ENCODE measurements at regions of chr9 and their contacts with region 1.

Region 1: GRCh38 chr9:125255781-125256391 is 5.7 kb upstream of the GAPVD1 start:
- H3K4me3 ChIP-seq: no peak overlapping the region
- H3K27ac ChIP-seq: no peak overlapping the region
- H3K4me1 ChIP-seq: no peaks in the 10 kb centered on the region
- CTCF ChIP-seq: peak; percentile 38

Region 2: GRCh38 chr9:125361837-125362531 is 106.1 kb after region 1 on chr9:
- CTCF ChIA-PET with region 1: interaction called, 27 read pairs
- POLR2A ChIA-PET with region 1: interaction called, 3 read pairs
- H3K4me3 ChIP-seq: no peak overlapping the region
- H3K27ac ChIP-seq: no peak overlapping the region
- H3K4me1 ChIP-seq: no peaks in the 10 kb centered on the region
- CTCF ChIP-seq: no peak

Region 3: DNA sequence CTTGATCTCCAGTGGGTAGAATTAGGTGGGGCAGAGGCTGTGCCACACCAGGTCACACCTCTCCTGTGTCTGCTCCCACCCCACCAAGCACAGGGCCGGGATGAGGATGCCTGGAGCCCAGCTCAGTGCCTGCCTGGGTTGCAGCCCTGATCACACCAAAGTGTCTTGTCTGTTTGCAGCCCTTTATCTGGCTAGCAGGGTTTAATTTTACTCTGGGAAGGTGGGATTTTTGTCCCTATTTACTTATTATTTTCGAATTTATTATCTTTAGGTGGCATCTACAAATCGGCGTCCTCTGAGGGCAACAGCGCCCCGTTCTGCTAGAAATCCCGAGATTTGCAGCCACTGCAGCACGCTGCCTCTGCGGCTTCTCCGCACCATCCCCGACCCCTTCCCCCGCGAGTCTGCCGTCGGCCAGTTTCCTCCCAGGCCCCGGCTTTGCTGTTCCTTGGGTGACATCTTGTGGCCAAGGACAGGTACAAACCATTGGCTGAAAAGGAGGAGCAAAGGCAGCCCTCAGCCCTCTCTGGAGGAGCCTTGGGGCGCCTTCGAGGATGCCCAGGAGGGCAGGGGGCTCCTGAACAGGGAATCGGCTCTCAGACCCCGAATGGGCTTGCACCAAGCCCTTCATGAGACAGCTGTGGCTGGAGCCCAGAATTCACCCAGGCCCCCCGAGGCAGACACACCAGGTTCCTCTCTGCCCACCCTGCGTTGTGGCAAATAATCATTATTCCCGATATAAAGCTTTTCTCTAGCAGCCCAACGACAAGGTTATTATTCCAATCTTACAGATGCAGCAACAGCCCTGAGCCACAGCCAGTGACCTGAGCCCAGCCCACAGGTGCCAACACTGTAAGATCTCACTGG is 118.8 kb after region 1 on chr9:
- CTCF ChIA-PET with region 1: interaction called, 14 read pairs
- POLR2A ChIA-PET with region 1: no interaction called
- H3K4me3 ChIP-seq: no peak overlapping the region
- H3K27ac ChIP-seq: no peak overlapping the region
- H3K4me1 ChIP-seq: no peaks in the 10 kb centered on the region
- CTCF ChIP-seq: peak; percentile 89

Region 4: GRCh38 chr9:125608489-125609224 is 352.8 kb after region 1 on chr9:
- CTCF ChIA-PET with region 1: no interaction called
- POLR2A ChIA-PET with region 1: no interaction called
- H3K4me3 ChIP-seq: no peak overlapping the region
- H3K27ac ChIP-seq: no peak overlapping the region
- H3K4me1 ChIP-seq: no peaks in the 10 kb centered on the region
- CTCF ChIP-seq: no peak

Measured in HEK293 (cell line).